Activated B cell treated with CpG ODN at 0.5 μM for 24 hours (primary cell): ENCODE measurements at regions of chr10 and their contacts with region 1.

Region 1: DNA sequence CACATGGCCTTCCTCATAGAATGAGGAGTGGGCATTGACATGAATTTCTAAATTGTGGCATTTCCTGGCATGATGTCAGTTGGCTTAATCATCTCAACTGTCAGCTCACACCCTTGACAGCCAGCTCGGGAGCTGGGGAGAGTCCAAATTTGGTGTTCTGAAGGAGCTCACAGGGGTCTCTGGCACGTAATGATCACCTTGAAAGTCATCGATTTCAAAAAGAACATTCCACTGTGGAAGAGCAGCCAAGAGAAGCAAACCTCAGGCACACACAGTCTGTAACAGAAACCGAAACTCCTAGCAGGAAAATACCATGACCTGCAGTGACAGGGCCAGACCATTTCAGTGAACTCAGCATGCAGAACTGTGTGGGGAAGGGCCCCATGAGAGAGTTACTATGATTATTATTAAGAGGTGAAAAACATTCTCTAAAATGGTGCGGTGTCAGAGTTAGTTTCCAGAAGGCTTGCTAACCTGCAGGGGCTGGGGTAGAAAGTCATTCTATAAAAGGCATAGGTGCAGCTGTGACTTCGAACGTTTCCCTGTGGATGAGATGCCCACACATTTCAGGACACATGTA is 26.4 kb upstream of the KLF6 start:
- DNase-seq: peak; percentile 29
- ATAC-seq: peak; percentile 95
- H3K4me3 Mint-ChIP-seq: peak overlapping the region; percentile 74
- H3K27ac Mint-ChIP-seq: peak overlapping the region; percentile 84
- H3K4me1 Mint-ChIP-seq: peaks cover 52% of the 10 kb centered on the region
- H3K27me3 Mint-ChIP-seq: no peaks in the 10 kb centered on the region
- CTCF ChIP-seq: no peak

Region 2: GRCh38 chr10:3828404-3829155 is 17.2 kb after region 1 on chr10:
- CTCF ChIA-PET with region 1: no interaction called
- POLR2A ChIA-PET with region 1: interaction called, 5 read pairs
- intact Hi-C with region 1: loop called (anchors 1 kb)
- DNase-seq: no peak
- ATAC-seq: peak; percentile 65
- H3K4me3 Mint-ChIP-seq: peak overlapping the region; percentile 75
- H3K27ac Mint-ChIP-seq: peak overlapping the region; percentile 82
- H3K4me1 Mint-ChIP-seq: peaks cover 23% of the 10 kb centered on the region
- H3K27me3 Mint-ChIP-seq: no peaks in the 10 kb centered on the region
- CTCF ChIP-seq: no peak

Region 3: DNA sequence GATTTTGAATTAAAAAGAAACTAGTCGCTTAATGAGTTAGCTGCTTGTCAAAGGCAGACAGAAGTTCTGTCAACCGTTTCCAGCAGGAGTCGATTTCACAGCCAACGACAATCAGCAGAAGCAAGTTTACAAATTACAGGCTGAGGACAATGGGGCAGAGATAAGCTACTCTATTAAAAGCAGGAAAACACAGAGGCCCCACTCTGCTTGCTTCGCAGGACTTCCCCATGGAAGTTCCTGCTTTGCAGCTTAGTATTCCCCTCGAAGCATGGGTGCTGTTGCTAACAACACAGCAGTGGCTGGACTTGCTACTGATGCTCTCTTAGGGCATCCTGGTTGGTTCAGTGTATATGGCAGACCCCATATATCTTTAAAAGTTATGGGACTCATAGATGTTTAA is 24.4 kb after region 1 on chr10:
- CTCF ChIA-PET with region 1: no interaction called
- POLR2A ChIA-PET with region 1: interaction called, 8 read pairs
- intact Hi-C with region 1: loop called (anchors 1 kb)
- DNase-seq: no peak
- ATAC-seq: peak; percentile 50
- H3K4me3 Mint-ChIP-seq: no peak overlapping the region
- H3K27ac Mint-ChIP-seq: peak overlapping the region; percentile 12
- H3K4me1 Mint-ChIP-seq: peaks cover 23% of the 10 kb centered on the region
- H3K27me3 Mint-ChIP-seq: no peaks in the 10 kb centered on the region
- CTCF ChIP-seq: no peak